ENCODE measurements at regions of chr9 and their contacts with region 1.

Region 1: GRCh38 chr9:78369639-78370219 is 72.8 kb downstream of the PSAT1 start:
- DNase-seq: peak; percentile 73
- H3K4me3 ChIP-seq: no peak overlapping the region
- H3K27ac ChIP-seq: no peak overlapping the region
- H3K4me1 ChIP-seq: peaks cover 0 to 7% (median 0%) of the 10 kb centered on the region in 4 donors
- H3K27me3 ChIP-seq: peaks cover 0 to 7% (median 0%) of the 10 kb centered on the region in 3 donors
- CTCF ChIP-seq: peak; percentile 47 to 74 (median 64)
- EP300 ChIP-seq: no peak
- POLR2A ChIP-seq: no peak

Region 2: DNA sequence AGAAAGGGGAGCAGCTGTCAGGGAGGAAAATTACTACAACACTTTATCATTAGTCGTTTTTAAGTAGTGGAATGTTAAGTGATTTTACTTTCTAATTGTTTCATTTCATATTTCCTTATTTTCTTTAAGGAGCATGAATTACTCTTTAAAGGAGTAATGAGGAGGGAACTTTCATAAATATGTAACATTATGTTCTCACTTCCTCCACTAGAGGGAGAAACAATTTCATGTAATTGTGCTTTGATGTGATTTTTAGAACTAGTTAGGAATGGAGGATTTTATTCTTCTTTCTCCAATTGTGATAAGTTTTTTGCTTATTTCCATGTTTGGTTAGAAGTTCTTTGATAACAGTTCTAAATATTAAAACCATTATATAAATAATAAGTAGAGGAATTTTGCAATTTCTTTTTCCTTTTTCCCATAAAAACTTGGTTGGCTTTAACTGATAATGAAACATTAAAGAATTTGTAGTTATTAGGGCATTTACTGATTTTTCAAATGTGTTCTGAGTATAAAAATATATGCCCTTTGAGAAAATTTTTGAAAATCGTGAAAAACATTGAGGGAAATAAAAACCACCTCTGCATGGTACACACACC is 108.2 kb before region 1 on chr9:
- intact Hi-C with region 1: loop called (anchors 1 kb)
- DNase-seq: no peak
- H3K4me3 ChIP-seq: no peak overlapping the region
- H3K27ac ChIP-seq: no peak overlapping the region
- H3K4me1 ChIP-seq: no peaks in the 10 kb centered on the region
- H3K27me3 ChIP-seq: no peaks in the 10 kb centered on the region
- CTCF ChIP-seq: peak; percentile 29 to 68 (median 55)
- EP300 ChIP-seq: no peak
- POLR2A ChIP-seq: no peak

Region 3: GRCh38 chr9:78278177-78278777 is 91.5 kb before region 1 on chr9:
- intact Hi-C with region 1: loop called (anchors 5 kb)
- DNase-seq: no peak
- H3K4me3 ChIP-seq: no peak overlapping the region
- H3K27ac ChIP-seq: no peak overlapping the region
- H3K4me1 ChIP-seq: peaks cover 0 to 24% (median 19%) of the 10 kb centered on the region in 4 donors
- H3K27me3 ChIP-seq: no peaks in the 10 kb centered on the region
- CTCF ChIP-seq: no peak
- EP300 ChIP-seq: no peak
- POLR2A ChIP-seq: no peak

Region 4: GRCh38 chr9:78932830-78933627 is 563.3 kb after region 1 on chr9:
- intact Hi-C with region 1: no loop called
- DNase-seq: no peak
- H3K4me3 ChIP-seq: no peak overlapping the region
- H3K27ac ChIP-seq: no peak overlapping the region
- H3K4me1 ChIP-seq: no peaks in the 10 kb centered on the region
- H3K27me3 ChIP-seq: no peaks in the 10 kb centered on the region
- CTCF ChIP-seq: no peak
- EP300 ChIP-seq: no peak
- POLR2A ChIP-seq: no peak

Measured in sigmoid colon (tissue), 7 donors.